Heart left ventricle (tissue), 16 donors: ENCODE measurements at regions of chr5 and their contacts with region 1.

Region 1: GRCh38 chr5:83199126-83199525 is 121.8 kb downstream of the XRCC4 start:
- DNase-seq: no peak
- ATAC-seq: no peak
- H3K4me3 ChIP-seq: no peak overlapping the region
- H3K27ac ChIP-seq: no peak overlapping the region
- H3K4me1 ChIP-seq: no peaks in the 10 kb centered on the region
- H3K27me3 ChIP-seq: no peaks in the 10 kb centered on the region
- CTCF ChIP-seq: no peak
- POLR2A ChIP-seq: no peak

Region 2: DNA sequence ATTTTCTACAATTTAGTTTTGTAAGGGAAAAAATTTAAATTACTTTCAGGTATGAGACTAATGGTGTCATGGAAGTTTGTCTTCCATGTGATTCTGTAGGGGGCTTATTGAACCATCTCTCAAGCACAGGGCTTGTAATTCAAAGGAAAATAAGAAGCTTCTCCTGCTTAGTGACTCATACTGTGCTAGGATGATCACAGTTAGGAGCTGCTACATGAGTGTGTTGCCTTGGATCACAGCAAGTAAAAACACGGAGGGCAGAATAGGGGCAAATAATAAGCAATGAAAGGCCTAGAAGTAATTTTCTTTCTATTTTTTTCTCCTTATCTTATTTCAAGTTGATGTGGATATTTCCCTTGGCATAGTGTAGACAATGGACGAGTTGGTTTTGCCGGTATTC is 150.8 kb before region 1 on chr5:
- intact Hi-C with region 1: no loop called
- DNase-seq: no peak
- ATAC-seq: peak in 1 of 4 donors; percentile 24
- H3K4me3 ChIP-seq: no peak overlapping the region
- H3K27ac ChIP-seq: no peak overlapping the region
- H3K4me1 ChIP-seq: peaks cover 0 to 12% (median 0%) of the 10 kb centered on the region in 12 donors
- H3K27me3 ChIP-seq: no peaks in the 10 kb centered on the region
- CTCF ChIP-seq: no peak
- POLR2A ChIP-seq: no peak

Region 3: DNA sequence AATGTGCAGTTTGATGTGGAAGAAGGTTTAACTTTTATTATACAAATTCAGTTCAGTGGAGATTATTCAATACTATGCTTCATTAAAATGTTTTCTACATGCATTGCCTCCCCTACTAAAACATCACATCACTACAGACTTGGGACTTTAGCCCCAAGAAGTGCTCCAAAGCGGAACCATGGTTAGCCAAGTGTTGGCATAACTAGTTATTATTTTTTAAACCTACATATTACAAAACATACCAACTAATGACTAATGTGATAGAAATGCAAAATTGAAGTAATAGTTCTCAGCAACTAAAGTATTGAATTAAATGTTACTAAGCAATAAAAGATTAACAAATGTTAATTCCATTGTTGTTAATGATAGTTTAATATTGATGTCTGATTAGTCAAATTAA is 47.3 kb before region 1 on chr5:
- intact Hi-C with region 1: no loop called
- DNase-seq: no peak
- ATAC-seq: no peak
- H3K4me3 ChIP-seq: no peak overlapping the region
- H3K27ac ChIP-seq: no peak overlapping the region
- H3K4me1 ChIP-seq: peaks cover 0 to 7% (median 0%) of the 10 kb centered on the region in 12 donors
- H3K27me3 ChIP-seq: no peaks in the 10 kb centered on the region
- CTCF ChIP-seq: no peak
- POLR2A ChIP-seq: no peak

Region 4: DNA sequence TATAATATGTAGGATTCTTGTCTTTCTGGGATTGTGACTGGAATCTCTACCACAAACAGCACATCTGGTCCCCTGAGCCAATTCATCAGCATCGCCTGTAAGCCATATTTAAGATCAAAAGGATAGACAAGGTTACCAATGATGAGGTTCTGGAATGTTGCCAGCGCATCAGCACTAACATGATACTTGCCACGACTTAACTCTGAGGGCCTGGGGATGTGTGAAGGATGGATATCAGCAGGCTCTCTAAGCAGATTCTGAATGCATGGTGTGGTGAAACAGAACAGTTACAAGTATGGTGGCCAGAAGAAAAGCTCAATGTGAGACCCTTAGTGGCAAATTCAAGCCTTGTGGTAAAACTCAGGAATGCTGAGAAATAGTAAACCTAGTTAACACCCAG is 21.2 kb after region 1 on chr5:
- intact Hi-C with region 1: loop called in 1 of 10 experiments (anchors 2 kb)
- DNase-seq: no peak
- ATAC-seq: no peak
- H3K4me3 ChIP-seq: no peak overlapping the region
- H3K27ac ChIP-seq: no peak overlapping the region
- H3K4me1 ChIP-seq: no peaks in the 10 kb centered on the region
- H3K27me3 ChIP-seq: no peaks in the 10 kb centered on the region
- CTCF ChIP-seq: no peak
- POLR2A ChIP-seq: no peak

Region 5: DNA sequence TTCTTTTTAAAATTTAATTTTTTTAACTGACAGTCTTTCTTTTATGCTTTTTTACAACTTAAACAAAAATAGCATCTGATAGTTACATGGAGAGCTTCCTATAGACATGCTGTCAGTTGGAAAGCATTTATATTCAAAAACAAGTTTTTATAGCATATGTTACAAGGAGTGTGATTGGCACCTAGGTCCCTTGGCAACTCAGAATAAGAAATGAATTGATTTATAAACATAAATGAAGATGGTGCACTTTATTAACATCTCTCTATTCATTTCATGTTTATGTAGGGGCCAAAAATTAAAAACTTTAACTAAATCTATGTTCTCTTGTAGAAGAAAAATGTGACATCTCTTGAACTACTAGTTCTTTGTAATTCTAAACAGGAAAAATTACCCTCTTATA is 31.4 kb after region 1 on chr5:
- intact Hi-C with region 1: no loop called
- DNase-seq: no peak
- ATAC-seq: no peak
- H3K4me3 ChIP-seq: no peak overlapping the region
- H3K27ac ChIP-seq: no peak overlapping the region
- H3K4me1 ChIP-seq: no peaks in the 10 kb centered on the region
- H3K27me3 ChIP-seq: no peaks in the 10 kb centered on the region
- CTCF ChIP-seq: no peak
- POLR2A ChIP-seq: no peak